Breast epithelium (tissue), 4 donors: ENCODE measurements at regions of chr1 and their contacts with region 1.

Region 1: DNA sequence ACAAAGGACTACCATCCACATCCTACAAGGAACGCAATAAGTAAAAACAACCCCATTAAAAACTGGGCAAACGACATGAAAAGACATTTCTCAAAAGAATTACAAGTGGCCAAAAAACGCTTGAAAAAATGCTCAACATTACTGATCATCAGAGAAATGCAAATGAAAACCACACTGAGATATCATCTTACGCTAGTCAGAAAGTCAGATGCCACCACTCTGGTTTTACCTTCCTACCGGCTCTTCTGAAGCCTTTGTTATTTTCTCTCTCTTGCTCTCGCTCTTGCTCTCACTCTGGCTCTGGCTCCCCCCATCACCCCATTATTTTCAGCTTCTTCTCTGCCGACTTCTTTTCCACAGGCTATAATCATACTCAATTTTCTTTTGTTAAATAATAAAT is 38.8 kb downstream of the VPS45 start:
- DNase-seq: no peak
- H3K4me3 ChIP-seq: no peak overlapping the region
- H3K27ac ChIP-seq: no peak overlapping the region
- H3K4me1 ChIP-seq: no peaks in the 10 kb centered on the region
- H3K27me3 ChIP-seq: no peaks in the 10 kb centered on the region
- CTCF ChIP-seq: no peak
- POLR2A ChIP-seq: no peak

Region 2: DNA sequence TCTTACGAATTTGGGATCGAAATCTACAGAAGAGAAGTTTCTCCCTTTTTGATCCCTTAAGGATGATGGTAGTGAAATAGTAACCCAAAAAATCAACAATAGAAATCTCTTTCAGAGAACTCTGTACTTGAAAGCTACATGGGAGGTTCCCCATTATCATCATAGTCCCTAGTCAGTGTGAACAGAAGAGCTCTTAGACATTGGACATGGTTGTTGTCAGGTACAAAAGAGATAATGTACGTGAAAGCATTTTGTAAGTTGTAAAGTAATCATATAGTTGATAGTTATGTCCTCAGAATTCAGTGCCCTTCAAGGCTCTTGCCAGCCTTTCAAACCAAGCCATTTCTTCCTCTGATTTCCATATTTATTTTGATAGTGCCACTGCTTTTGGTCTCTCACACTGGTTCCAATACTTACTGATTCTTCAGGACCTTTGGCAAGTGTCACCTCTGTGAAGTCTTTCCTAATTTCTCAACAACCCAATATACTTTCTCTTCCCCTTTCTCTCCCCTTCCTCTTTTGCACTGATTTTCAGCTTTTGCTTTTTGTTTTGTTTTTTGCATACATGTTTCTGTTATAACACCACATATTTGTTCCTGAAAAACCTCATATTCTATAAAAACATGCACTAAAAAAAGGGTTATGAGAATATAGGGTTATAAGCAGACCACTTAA is 16.4 kb before region 1 on chr1:
- intact Hi-C with region 1: loop called (anchors 1 kb)
- DNase-seq: no peak
- H3K4me3 ChIP-seq: no peak overlapping the region
- H3K27ac ChIP-seq: no peak overlapping the region
- H3K4me1 ChIP-seq: no peaks in the 10 kb centered on the region
- H3K27me3 ChIP-seq: no peaks in the 10 kb centered on the region
- CTCF ChIP-seq: no peak
- POLR2A ChIP-seq: no peak

Region 3: DNA sequence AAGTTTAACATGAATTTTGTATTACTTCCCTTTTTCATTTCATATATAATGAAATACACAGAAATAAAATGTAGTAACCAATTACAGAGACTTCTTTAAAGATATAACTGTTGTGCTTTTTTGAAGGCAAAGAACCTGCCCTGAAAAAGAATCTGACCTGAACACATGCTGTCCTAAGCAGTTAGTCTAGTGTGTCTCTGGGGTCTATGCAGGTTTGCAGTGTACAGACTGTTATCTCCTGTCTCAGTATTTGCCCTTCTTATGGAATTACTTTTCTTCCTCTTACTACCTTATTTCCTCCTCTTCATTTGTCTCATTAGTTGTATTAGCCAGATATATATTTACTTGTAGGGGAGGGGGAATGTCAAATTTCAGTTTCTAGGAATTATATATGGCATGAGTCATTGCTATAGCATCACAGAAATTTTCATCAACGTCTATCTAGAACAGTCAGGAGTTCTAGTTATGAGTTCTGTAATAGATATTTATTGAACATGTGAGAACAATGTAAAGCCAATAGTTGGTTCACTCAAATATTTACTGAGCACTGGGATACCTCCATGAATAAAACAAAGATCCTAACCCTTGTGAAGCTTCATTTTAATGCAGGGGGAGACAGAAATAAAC is 15.0 kb after region 1 on chr1:
- intact Hi-C with region 1: no loop called
- DNase-seq: no peak
- H3K4me3 ChIP-seq: no peak overlapping the region
- H3K27ac ChIP-seq: no peak overlapping the region
- H3K4me1 ChIP-seq: no peaks in the 10 kb centered on the region
- H3K27me3 ChIP-seq: no peaks in the 10 kb centered on the region
- CTCF ChIP-seq: no peak
- POLR2A ChIP-seq: no peak